CD8-positive, alpha-beta T cell (primary cell): ENCODE measurements at regions of chr18 and their contacts with region 1.

Region 1: DNA sequence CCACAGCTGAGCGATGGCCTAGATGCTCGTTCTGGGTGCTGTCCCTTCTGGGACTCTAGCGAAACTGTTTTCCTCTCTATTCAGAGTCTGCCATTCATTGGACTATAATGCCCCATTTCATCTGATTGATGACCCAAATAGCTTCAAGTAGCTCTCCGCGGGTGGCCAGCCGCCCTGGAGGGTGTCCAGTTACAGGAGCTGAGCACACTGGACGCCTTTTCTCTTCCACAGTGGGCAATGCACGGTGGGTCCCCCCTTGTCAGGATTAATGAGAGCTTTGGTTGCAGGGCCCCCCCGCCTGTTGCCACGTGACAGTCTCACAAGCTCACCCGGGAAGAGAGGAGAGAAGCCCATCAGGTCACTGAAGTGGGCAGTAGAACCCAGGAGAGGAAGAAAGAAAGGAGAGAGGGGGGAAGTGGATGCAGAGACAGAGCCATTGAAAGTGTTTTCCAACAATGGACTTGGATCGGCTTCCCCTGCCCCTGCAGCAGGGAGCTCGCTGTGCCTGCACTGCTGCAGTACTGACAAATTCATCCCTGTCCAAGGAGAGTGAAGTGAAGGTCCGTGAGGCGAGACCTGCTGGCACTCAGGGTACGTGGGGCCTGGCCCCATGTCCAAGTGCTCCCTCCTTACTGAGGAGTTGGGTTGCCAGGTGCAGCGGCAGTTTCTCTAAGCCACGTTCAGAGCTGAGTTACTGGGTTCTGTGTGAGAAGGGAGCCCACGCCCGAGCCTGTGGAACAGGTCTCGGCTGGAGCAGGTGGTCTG is 44.8 kb downstream of the DIPK1C start:
- DNase-seq: no peak
- ATAC-seq: no peak
- H3K4me3 ChIP-seq: no peak overlapping the region
- H3K4me3 Mint-ChIP-seq: no peak overlapping the region
- H3K27ac ChIP-seq: no peak overlapping the region
- H3K27ac Mint-ChIP-seq: no peak overlapping the region
- H3K4me1 ChIP-seq: peaks cover 19% of the 10 kb centered on the region
- H3K4me1 Mint-ChIP-seq: peaks cover 22% of the 10 kb centered on the region
- H3K27me3 ChIP-seq: no peaks in the 10 kb centered on the region
- H3K27me3 Mint-ChIP-seq: no peaks in the 10 kb centered on the region
- CTCF ChIP-seq: no peak

Region 2: GRCh38 chr18:73124175-73124574 is 1288.1 kb before region 1 on chr18:
- CTCF ChIA-PET with region 1: no interaction called
- POLR2A ChIA-PET with region 1: no interaction called
- intact Hi-C with region 1: no loop called
- DNase-seq: no peak
- ATAC-seq: no peak
- H3K4me3 ChIP-seq: no peak overlapping the region
- H3K4me3 Mint-ChIP-seq: no peak overlapping the region
- H3K27ac ChIP-seq: no peak overlapping the region
- H3K27ac Mint-ChIP-seq: no peak overlapping the region
- H3K4me1 ChIP-seq: no peaks in the 10 kb centered on the region
- H3K4me1 Mint-ChIP-seq: no peaks in the 10 kb centered on the region
- H3K27me3 ChIP-seq: no peaks in the 10 kb centered on the region
- H3K27me3 Mint-ChIP-seq: no peaks in the 10 kb centered on the region
- CTCF ChIP-seq: no peak

Region 3: GRCh38 chr18:74196220-74197119 is 215.8 kb before region 1 on chr18:
- CTCF ChIA-PET with region 1: no interaction called
- POLR2A ChIA-PET with region 1: no interaction called
- intact Hi-C with region 1: no loop called
- DNase-seq: peak; percentile 8 to 86 (median 46)
- ATAC-seq: peak; percentile 98
- H3K4me3 ChIP-seq: peak overlapping the region; percentile 21 to 42
- H3K4me3 Mint-ChIP-seq: peak overlapping the region; percentile 79
- H3K27ac ChIP-seq: no peak overlapping the region
- H3K27ac Mint-ChIP-seq: peak overlapping the region; percentile 85
- H3K4me1 ChIP-seq: peaks cover 4% of the 10 kb centered on the region
- H3K4me1 Mint-ChIP-seq: peaks cover 6% of the 10 kb centered on the region
- H3K27me3 ChIP-seq: no peaks in the 10 kb centered on the region
- H3K27me3 Mint-ChIP-seq: peaks cover 18% of the 10 kb centered on the region
- CTCF ChIP-seq: peak; percentile 89

Region 4: DNA sequence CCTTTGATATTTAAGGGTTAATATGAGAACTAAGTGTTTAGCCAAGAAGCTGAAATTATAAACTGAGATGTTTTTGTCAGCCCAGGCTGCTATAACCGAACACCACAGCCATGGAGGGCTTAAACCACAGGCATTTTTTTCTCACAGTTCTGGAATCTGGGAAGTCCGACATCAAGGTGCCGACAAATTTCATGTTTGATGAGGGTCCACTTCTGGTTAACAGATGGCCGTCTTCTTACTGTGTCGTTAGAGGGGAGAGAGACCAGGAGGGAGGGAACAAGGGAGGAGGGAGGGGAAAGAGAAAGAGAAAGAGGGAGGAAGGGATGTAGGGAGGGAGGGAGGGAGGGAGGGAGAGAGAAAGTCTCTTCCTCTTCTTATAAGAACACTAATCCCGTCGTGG is 77.4 kb after region 1 on chr18:
- CTCF ChIA-PET with region 1: interaction called, 5 read pairs
- POLR2A ChIA-PET with region 1: no interaction called
- intact Hi-C with region 1: loop called (anchors 5 to 10 kb)
- DNase-seq: no peak
- ATAC-seq: no peak
- H3K4me3 ChIP-seq: no peak overlapping the region
- H3K4me3 Mint-ChIP-seq: no peak overlapping the region
- H3K27ac ChIP-seq: no peak overlapping the region
- H3K27ac Mint-ChIP-seq: no peak overlapping the region
- H3K4me1 ChIP-seq: peaks cover 11% of the 10 kb centered on the region
- H3K4me1 Mint-ChIP-seq: peaks cover 20% of the 10 kb centered on the region
- H3K27me3 ChIP-seq: no peaks in the 10 kb centered on the region
- H3K27me3 Mint-ChIP-seq: no peaks in the 10 kb centered on the region
- CTCF ChIP-seq: no peak